ENCODE measurements at regions of chr14 and their contacts with region 1.

Region 1: DNA sequence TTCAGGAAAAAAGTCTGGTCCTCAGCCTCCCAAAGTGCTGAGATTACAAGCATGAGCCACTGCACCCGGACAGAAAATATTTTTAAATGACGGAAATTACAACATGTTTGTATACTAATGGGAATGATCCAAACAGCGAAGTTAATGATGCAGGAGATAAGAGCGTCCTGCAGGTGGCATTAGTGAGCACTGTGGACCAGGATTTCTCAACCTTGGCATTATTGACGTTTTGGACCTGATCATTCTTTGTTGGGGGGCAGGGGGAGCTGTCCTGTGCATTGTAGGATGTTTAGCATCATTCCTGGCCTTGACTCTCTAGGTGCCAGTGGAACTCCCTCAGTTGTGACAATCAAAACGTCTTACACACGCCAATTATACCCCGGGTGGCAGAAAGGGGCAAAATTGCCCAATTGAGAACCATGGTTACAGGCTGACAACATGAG is 34.1 kb downstream of the SCFD1 start:
- DNase-seq: peak; percentile 32
- H3K4me3 Mint-ChIP-seq: no peak overlapping the region
- H3K27ac Mint-ChIP-seq: no peak overlapping the region
- H3K4me1 Mint-ChIP-seq: no peaks in the 10 kb centered on the region
- H3K27me3 Mint-ChIP-seq: no peaks in the 10 kb centered on the region

Region 2: GRCh38 chr14:30638926-30639325 is 17.3 kb before region 1 on chr14:
- CTCF ChIA-PET with region 1: no interaction called
- intact Hi-C with region 1: no loop called
- DNase-seq: no peak
- H3K4me3 Mint-ChIP-seq: no peak overlapping the region
- H3K27ac Mint-ChIP-seq: no peak overlapping the region
- H3K4me1 Mint-ChIP-seq: peaks cover 2% of the 10 kb centered on the region
- H3K27me3 Mint-ChIP-seq: no peaks in the 10 kb centered on the region

Region 3: DNA sequence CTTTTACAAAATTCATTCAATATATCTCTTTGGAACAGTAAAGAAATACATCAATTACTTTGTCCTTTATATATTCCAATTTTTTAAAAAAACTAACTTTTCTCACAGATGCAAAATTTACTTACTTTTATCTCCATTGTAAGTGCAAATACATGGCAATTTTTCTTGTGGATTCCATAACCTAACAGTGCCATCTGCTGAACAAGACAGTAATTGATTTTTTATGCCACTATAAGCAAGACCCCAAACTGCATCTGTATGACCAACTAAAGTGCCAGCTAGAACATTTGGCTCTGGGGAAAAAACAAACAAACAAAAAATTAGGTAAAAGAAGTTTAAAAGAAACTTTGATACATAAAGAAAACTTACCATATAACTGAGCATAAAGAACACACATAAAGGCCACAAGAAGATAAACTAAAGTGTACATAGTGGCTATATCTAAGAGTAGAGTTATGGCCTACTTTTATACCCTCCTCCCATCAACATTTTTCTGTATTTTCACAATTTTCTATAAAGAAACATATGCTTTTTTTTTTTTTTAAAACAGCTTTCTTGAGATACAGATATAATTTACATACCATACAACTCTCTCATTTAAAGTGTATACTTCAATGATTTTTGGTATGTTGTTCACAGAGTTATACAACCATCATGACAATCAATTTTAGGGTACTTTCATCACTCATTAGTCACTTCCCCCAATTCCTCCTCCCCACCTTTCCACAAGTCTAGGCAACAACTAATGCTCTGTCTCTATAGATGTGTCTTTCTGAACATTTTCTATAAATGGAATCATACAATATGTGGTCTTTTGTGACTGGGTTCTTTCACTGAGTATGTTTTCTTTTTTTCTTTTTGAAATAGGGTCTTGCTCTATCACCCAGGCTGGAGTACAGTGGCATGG is 250.8 kb after region 1 on chr14:
- CTCF ChIA-PET with region 1: interaction called, 4 read pairs
- intact Hi-C with region 1: loop called (anchors 1 kb)
- DNase-seq: no peak
- H3K4me3 Mint-ChIP-seq: no peak overlapping the region
- H3K27ac Mint-ChIP-seq: no peak overlapping the region
- H3K4me1 Mint-ChIP-seq: peaks cover 2% of the 10 kb centered on the region
- H3K27me3 Mint-ChIP-seq: no peaks in the 10 kb centered on the region

Region 4: GRCh38 chr14:30982533-30982932 is 326.3 kb after region 1 on chr14:
- CTCF ChIA-PET with region 1: no interaction called
- intact Hi-C with region 1: loop called (anchors 2 kb)
- DNase-seq: no peak
- H3K4me3 Mint-ChIP-seq: no peak overlapping the region
- H3K27ac Mint-ChIP-seq: no peak overlapping the region
- H3K4me1 Mint-ChIP-seq: peaks cover 16% of the 10 kb centered on the region
- H3K27me3 Mint-ChIP-seq: no peaks in the 10 kb centered on the region